PC-9 (cell line): ENCODE measurements at regions of chr4 and their contacts with region 1.

Region 1: DNA sequence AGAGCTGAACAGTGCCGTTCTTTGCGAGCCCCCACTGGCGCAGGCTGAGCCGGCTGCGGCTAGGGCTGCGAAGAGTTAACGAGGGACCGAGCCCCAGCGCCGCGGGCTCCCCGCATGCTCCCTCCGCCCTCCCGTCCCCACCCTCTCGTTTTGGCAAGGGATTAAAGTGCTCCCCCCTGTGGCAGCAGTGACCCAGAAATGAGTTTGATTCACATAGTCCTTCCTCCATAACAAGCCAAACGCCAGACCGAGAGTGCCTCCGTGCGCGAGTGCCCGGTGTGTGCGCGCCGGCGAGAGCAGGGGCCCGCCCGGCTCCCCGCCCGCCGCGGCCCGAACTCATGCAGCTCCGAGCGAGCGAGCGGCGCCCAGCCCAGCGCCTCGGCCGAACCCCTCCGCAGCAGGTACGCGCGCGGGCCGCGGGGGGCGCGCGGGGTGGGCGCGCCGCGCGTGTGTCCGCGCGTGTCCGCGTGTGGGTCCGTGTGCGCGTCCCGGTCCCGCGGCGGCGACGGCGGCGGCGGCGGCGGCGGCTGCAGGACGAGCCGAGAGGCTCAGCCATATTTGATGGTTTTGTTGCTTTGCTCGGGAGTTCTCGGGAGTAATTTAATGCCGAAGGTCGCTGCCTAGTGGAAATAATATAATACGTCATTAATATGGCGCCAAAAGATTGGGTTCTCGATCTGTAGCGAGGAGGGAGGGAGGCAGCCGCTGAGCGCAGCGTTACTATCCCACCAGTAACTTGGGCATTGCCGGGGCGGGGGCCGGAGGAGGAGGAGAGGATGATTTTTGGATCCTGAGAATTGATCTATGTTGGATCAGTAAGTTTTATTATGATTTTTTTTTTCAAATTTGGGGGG is at the start of gene JADE1:
- DNase-seq: peak; percentile 69 to 90
- H3K4me3 ChIP-seq: peak within 1 kb of the TSS; percentile 84
- H3K27ac ChIP-seq: peak within 1 kb of the TSS; percentile 78
- H3K4me1 ChIP-seq: 0 out of 2 replicates have a peak, but pooled peaks cover 20% of the 10 kb centered on the region
- H3K27me3 ChIP-seq: no peaks in the 10 kb centered on the region
- CTCF ChIP-seq: peak; percentile 62
- total RNA-seq, gene JADE1: 23.1 and 30.7 TPM in 2 replicates

Region 2: GRCh38 chr4:128060699-128061565 is 748.8 kb before region 1 on chr4 and contains the start of gene LARP1B:
- CTCF ChIA-PET with region 1: no interaction called
- POLR2A ChIA-PET with region 1: no interaction called
- intact Hi-C with region 1: loop called (anchors 10 kb)
- DNase-seq: peak; percentile 82 to 98
- H3K4me3 ChIP-seq: peak within 1 kb of the TSS; percentile 88
- H3K27ac ChIP-seq: peak within 1 kb of the TSS; percentile 93
- H3K4me1 ChIP-seq: peaks cover 4% of the 10 kb centered on the region; the same call in 1 of the 2 replicates
- H3K27me3 ChIP-seq: no peaks in the 10 kb centered on the region
- CTCF ChIP-seq: no peak
- total RNA-seq, gene LARP1B: 17.7 and 22.0 TPM in 2 replicates

Region 3: GRCh38 chr4:128310266-128310697 is 499.4 kb before region 1 on chr4:
- CTCF ChIA-PET with region 1: no interaction called
- POLR2A ChIA-PET with region 1: no interaction called
- intact Hi-C with region 1: no loop called
- DNase-seq: no peak
- H3K4me3 ChIP-seq: no peak overlapping the region
- H3K27ac ChIP-seq: no peak overlapping the region
- H3K4me1 ChIP-seq: peaks cover 13% of the 10 kb centered on the region
- H3K27me3 ChIP-seq: no peaks in the 10 kb centered on the region
- CTCF ChIP-seq: no peak

Region 4: DNA sequence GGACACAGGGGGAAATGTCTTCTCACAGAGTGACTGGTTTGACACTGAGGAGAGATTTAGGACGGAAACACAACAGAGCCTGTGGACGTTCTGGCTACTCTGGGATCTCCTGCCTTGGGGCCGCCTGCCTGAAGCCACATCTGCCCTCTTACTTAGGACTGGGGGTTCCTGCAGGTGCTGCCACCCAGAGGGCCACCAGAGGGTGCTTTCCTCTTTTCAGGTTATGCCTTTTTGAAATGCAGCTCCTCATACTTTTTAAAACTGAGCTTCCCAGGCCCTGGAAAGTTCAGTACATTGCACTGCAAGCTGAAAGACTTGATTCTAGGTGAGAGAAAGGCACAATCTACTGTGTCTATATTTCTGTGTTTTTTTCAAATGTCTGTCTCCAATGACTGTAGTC is 429.8 kb before region 1 on chr4:
- CTCF ChIA-PET with region 1: no interaction called
- POLR2A ChIA-PET with region 1: no interaction called
- intact Hi-C with region 1: loop called (anchors 1 kb)
- DNase-seq: peak in 1 of 2 experiments; percentile 46
- H3K4me3 ChIP-seq: no peak overlapping the region
- H3K27ac ChIP-seq: no peak overlapping the region
- H3K4me1 ChIP-seq: no peaks in the 10 kb centered on the region
- H3K27me3 ChIP-seq: no peaks in the 10 kb centered on the region
- CTCF ChIP-seq: peak; percentile 64

Region 5: DNA sequence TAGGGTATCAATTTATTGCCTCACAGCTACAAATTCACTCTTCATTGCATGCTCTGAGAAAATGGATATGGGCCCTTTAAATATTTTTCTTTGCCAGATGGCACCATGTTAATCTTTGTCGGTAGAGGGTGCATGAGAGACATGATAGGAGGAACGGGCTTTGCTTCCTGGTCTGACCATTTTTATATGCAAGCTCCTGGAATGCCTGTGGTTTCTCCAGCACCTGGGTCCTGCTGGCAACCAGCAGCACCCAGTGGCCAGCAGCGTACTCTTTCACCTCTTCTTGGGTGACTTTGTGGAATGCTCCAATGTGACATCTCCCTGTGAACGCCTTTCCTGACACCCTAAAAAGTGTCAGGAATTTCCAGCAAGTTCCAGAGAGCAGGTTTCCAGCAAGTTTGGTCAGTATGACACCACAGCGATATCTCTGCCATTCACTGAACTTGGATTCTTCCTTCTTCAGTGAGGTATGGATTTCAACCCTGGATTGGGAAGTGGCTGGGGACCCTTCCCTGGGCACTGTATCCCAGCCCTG is 381.8 kb before region 1 on chr4:
- CTCF ChIA-PET with region 1: no interaction called
- POLR2A ChIA-PET with region 1: no interaction called
- intact Hi-C with region 1: loop called (anchors 1 kb)
- DNase-seq: peak; percentile 80 to 89
- H3K4me3 ChIP-seq: no peak overlapping the region
- H3K27ac ChIP-seq: no peak overlapping the region
- H3K4me1 ChIP-seq: peaks cover 10% of the 10 kb centered on the region; the same call in 1 of the 2 replicates
- H3K27me3 ChIP-seq: no peaks in the 10 kb centered on the region
- CTCF ChIP-seq: peak; percentile 72

Region 6: GRCh38 chr4:128512121-128512520 is 297.6 kb before region 1 on chr4:
- CTCF ChIA-PET with region 1: no interaction called
- POLR2A ChIA-PET with region 1: no interaction called
- intact Hi-C with region 1: no loop called
- DNase-seq: no peak
- H3K4me3 ChIP-seq: no peak overlapping the region
- H3K27ac ChIP-seq: no peak overlapping the region
- H3K4me1 ChIP-seq: peaks cover 8% of the 10 kb centered on the region
- H3K27me3 ChIP-seq: no peaks in the 10 kb centered on the region
- CTCF ChIP-seq: no peak

Region 7: DNA sequence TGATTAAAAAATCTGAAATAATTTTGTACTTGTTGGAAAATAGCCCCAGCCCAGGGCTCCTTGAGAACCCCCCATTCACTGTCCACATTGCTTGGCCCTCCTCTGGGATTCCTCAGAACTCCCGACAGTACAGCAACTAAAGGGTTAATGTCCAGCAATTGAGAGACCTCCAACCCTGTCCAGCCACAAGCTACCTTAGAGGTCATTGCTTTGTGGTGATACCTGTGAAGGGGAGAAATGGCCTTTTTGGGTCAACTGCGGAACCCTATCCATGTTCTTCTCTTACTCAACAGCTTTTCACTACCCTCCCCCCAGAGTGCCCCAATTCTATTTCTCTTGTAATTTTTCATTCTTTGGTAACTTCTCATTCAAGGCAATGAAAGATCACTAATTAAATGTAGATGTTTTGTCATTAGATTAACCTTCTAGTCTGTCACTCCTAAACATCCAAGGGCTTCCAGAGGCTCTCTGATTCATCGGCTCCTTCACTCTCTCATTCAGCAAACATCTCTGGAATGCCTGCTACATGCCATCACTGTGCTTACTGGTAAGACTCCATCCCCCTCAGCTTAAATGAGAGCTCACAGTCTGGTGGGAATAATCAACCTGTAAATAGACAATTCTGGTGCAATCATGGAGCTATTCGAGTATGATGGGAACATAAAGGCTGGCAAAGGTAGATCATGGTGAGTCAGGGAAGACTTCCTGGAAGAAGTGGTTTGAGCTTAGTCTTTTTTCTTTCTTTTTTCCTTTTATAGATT is 280.7 kb before region 1 on chr4:
- CTCF ChIA-PET with region 1: interaction called, 4 read pairs
- POLR2A ChIA-PET with region 1: no interaction called
- intact Hi-C with region 1: loop called (anchors 1 kb)
- DNase-seq: peak; percentile 65 to 97
- H3K4me3 ChIP-seq: no peak overlapping the region
- H3K27ac ChIP-seq: peak overlapping the region; percentile 80
- H3K4me1 ChIP-seq: peaks cover 60% of the 10 kb centered on the region
- H3K27me3 ChIP-seq: no peaks in the 10 kb centered on the region
- CTCF ChIP-seq: no peak

Region 8: GRCh38 chr4:128823025-128823661 is 13.4 kb after region 1 on chr4:
- CTCF ChIA-PET with region 1: no interaction called
- POLR2A ChIA-PET with region 1: interaction called, 28 read pairs
- intact Hi-C with region 1: no loop called
- DNase-seq: peak in 1 of 2 experiments; percentile 56
- H3K4me3 ChIP-seq: no peak overlapping the region
- H3K27ac ChIP-seq: peak overlapping the region; percentile 15; the same call in 1 of the 2 replicates
- H3K4me1 ChIP-seq: peaks cover 13% of the 10 kb centered on the region
- H3K27me3 ChIP-seq: no peaks in the 10 kb centered on the region
- CTCF ChIP-seq: no peak

Region 9: GRCh38 chr4:128863312-128864075 is 53.8 kb after region 1 on chr4:
- CTCF ChIA-PET with region 1: no interaction called
- POLR2A ChIA-PET with region 1: no interaction called
- intact Hi-C with region 1: loop called (anchors 1 kb)
- DNase-seq: peak in 1 of 2 experiments; percentile 59
- H3K4me3 ChIP-seq: no peak overlapping the region
- H3K27ac ChIP-seq: no peak overlapping the region
- H3K4me1 ChIP-seq: no peaks in the 10 kb centered on the region
- H3K27me3 ChIP-seq: no peaks in the 10 kb centered on the region
- CTCF ChIP-seq: peak; percentile 86